ENCODE measurements at regions of chr11 and their contacts with region 1.

Region 1: GRCh38 chr11:104979849-104980248 is 11.5 kb upstream of the CASP4 start:
- DNase-seq: no peak
- ATAC-seq: no peak

Region 2: GRCh38 chr11:105023003-105023402 is 43.2 kb after region 1 on chr11 and contains the start of gene CASP5:
- intact Hi-C with region 1: no loop called
- DNase-seq: no peak
- ATAC-seq: peak; percentile 19 to 49
- total RNA-seq, gene CASP5: 0.18 TPM in 1 of 2 donors, not detected in the other

Region 3: DNA sequence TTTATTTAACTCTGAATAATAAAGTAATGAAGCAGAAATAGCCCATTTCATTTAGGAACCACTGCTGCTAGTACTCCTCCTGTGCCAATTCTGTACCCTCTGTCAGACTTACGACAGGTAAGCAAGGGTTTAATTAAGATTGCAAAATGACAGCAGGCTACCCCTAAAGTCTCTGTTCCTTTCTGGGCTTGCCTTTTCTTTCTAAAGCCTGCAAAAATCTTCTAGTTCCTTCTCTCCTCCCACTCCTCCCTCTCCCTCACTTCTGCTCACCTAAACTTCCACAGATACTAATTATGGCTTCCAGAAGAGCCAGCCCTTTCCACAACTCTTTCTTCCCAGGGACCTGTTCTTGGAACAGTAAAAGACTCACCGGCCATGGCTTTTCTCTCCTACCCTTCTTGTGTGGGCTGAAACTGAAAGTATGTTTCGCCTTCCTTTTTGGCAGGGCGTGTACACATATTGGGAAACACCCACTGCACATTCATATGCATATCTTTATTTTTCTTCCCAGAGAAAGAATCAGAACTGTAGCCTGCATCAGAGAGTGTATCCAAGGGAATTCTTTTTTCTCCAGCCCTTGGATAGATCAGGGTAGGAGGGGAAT is 65.2 kb after region 1 on chr11 and contains the start of gene CARD16:
- intact Hi-C with region 1: loop called in 1 of 2 experiments (anchors 10 kb)
- DNase-seq: peak; percentile 31
- ATAC-seq: peak; percentile 85 to 92
- total RNA-seq, gene CARD16: 6.5 to 13.3 TPM

Region 4: DNA sequence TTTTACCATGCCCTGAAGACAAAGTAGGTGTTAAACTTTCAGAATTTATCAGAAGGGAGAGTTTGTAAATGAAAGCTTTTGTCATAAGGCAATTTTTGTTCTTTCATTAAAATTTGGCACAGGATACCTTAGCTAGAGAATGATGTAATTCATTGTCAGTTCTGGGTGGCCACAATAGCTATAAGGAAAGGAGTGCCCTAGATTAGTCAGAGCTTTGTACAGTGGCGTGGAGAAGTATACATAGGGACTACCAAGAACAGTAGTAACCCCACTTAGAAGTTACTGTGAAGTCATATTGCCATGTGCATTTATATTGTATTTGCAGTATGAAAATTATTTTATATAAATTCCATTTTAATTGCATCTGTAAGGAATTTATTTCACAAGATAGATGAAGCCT is 286.0 kb after region 1 on chr11:
- intact Hi-C with region 1: no loop called
- DNase-seq: no peak
- ATAC-seq: no peak